ENCODE measurements at regions of chr12 and their contacts with region 1.

Region 1: DNA sequence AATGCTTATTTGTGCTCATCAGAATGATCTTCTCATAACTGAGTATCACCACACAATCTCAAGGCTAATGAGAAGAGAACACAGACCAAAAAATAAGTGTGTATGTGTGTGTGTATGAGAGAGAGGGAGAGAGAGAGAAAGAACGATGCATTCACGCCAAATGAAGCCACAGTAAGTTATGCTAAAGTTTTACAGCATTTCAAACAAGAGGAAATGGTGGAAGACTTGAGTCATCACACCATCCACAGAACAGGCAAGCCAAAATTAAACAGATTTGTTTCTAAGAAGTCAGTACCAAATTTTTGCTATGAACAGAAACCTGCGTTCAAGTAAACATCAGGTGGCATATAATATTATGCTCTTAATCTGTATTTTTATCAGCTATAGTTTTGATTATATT is 141.2 kb downstream of the MED13L start:
- DNase-seq: no peak
- ATAC-seq: peak; percentile 56
- H3K4me3 Mint-ChIP-seq: no peak overlapping the region
- H3K27ac Mint-ChIP-seq: no peak overlapping the region
- H3K4me1 Mint-ChIP-seq: peaks cover 66% of the 10 kb centered on the region
- H3K27me3 Mint-ChIP-seq: no peaks in the 10 kb centered on the region
- CTCF ChIP-seq: no peak

Region 2: DNA sequence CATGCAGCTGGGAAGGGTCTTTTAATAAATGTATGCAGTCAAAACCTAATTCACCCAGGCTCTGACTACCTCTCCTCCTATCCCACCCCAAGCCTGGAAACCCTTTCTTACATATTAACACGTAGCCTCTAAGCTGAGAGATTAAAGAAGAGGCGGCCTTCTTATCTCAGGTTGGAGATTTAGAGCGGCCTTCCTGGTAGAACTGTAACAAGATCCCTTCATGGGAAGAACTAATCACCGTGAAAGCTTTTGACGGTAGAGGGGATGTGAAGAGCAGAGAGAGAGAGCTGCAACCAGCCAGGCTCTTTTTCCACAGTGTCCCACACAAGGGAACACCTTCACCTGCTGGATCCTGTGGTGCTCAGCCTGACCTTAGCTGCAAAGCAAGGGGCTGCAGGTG is 226.3 kb before region 1 on chr12:
- CTCF ChIA-PET with region 1: no interaction called
- POLR2A ChIA-PET with region 1: no interaction called
- intact Hi-C with region 1: no loop called
- DNase-seq: no peak
- ATAC-seq: no peak
- H3K4me3 Mint-ChIP-seq: no peak overlapping the region
- H3K27ac Mint-ChIP-seq: no peak overlapping the region
- H3K4me1 Mint-ChIP-seq: no peaks in the 10 kb centered on the region
- H3K27me3 Mint-ChIP-seq: peaks cover 12% of the 10 kb centered on the region
- CTCF ChIP-seq: no peak

Region 3: GRCh38 chr12:116099652-116100432 is 36.5 kb before region 1 on chr12:
- CTCF ChIA-PET with region 1: no interaction called
- POLR2A ChIA-PET with region 1: no interaction called
- intact Hi-C with region 1: no loop called
- DNase-seq: no peak
- ATAC-seq: no peak
- H3K4me3 Mint-ChIP-seq: no peak overlapping the region
- H3K27ac Mint-ChIP-seq: no peak overlapping the region
- H3K4me1 Mint-ChIP-seq: peaks cover 41% of the 10 kb centered on the region
- H3K27me3 Mint-ChIP-seq: no peaks in the 10 kb centered on the region
- CTCF ChIP-seq: no peak

Region 4: GRCh38 chr12:116123451-116124258 is 12.7 kb before region 1 on chr12:
- CTCF ChIA-PET with region 1: interaction called, 3 read pairs
- POLR2A ChIA-PET with region 1: interaction called, 3 read pairs
- intact Hi-C with region 1: loop called (anchors 2 kb)
- DNase-seq: peak; percentile 22
- ATAC-seq: peak; percentile 85
- H3K4me3 Mint-ChIP-seq: peak overlapping the region; percentile 55
- H3K27ac Mint-ChIP-seq: peak overlapping the region; percentile 30
- H3K4me1 Mint-ChIP-seq: peaks cover 68% of the 10 kb centered on the region
- H3K27me3 Mint-ChIP-seq: no peaks in the 10 kb centered on the region
- CTCF ChIP-seq: no peak

Region 5: GRCh38 chr12:116152268-116152667 is 15.9 kb after region 1 on chr12:
- CTCF ChIA-PET with region 1: interaction called, 6 read pairs
- POLR2A ChIA-PET with region 1: no interaction called
- intact Hi-C with region 1: loop called (anchors 2 kb)
- DNase-seq: no peak
- ATAC-seq: no peak
- H3K4me3 Mint-ChIP-seq: no peak overlapping the region
- H3K27ac Mint-ChIP-seq: peak overlapping the region; percentile 16
- H3K4me1 Mint-ChIP-seq: peaks cover 68% of the 10 kb centered on the region
- H3K27me3 Mint-ChIP-seq: no peaks in the 10 kb centered on the region
- CTCF ChIP-seq: no peak

Region 6: DNA sequence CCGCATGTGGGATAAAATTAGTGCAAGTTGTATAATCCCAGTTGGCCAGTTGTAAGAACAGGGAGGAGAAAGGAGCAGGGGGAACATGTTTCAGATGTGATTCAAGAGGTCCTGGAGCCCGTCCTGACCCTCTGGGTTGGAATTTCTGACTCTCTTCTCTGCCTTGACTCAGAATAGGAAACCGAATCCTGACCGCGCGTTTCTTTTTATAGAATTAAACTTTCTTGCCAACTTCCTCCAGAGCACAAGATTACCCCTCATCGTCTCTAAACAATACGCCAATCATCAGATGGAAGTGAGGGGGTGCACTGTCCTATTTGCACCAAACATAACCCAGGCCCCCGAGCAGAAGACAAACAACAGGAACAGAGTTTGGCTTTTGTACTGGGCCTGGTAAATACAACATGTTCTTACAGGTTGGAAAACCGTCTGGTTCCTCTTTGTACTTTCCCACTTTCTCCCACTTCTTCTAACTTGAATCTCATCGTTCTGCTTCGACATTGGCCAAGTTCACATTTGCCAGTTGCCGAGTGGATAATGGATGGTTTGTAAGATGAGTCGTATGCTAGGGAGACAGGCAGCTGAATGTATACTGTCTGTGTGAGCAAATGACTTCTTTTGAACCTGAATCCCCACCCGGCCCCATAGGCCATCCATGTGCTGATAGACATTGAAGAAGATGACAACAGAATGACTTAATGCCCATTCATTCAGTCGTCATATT is 183.7 kb after region 1 on chr12:
- CTCF ChIA-PET with region 1: no interaction called
- POLR2A ChIA-PET with region 1: no interaction called
- intact Hi-C with region 1: no loop called
- DNase-seq: no peak
- ATAC-seq: peak; percentile 29
- H3K4me3 Mint-ChIP-seq: peak overlapping the region; percentile 64
- H3K27ac Mint-ChIP-seq: peak overlapping the region; percentile 74
- H3K4me1 Mint-ChIP-seq: peaks cover 34% of the 10 kb centered on the region
- H3K27me3 Mint-ChIP-seq: no peaks in the 10 kb centered on the region
- CTCF ChIP-seq: no peak